Psoas muscle (tissue), 8 donors: ENCODE measurements at regions of chr6 and their contacts with region 1.

Region 1: DNA sequence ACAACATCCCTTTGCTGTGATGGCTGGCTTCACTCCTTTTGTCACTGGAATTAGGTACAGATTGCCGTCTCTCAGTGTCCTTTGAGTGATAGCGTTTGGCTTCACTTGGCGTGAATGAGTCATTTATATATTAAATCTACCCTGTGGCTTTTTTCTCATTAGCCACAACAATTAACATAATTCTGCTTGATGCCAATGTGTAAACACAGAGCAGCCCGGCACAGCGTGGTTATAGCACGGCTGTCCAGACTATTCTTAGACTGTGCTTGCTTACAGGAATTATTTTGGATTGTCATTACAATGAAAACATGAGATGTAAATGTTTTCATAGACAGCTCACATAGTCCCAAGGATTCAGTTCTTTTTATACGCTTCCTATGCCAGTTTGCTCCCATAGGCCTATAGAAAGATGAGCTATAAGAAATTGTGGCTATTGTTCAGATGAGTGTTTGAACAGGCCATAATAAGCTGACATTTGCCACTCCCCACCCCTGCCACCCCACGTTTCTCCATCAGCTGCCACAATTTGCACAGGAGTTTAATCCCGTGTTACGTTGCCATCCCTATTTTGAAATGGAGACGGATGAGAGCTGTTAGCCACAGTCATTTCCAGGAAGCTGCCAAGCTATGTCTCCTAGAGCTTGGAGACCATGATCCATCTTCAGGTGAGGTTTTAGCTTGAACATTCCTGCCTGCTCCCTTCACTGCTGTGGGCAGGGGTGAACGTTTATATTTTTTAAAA is 65.9 kb downstream of the PPP1R14C start:
- DNase-seq: no peak
- ATAC-seq: peak; percentile 63 to 77 (median 71)
- H3K4me3 ChIP-seq: no peak overlapping the region
- H3K27ac ChIP-seq: peak overlapping the region; percentile 82
- H3K4me1 ChIP-seq: peaks cover 37% of the 10 kb centered on the region
- H3K27me3 ChIP-seq: no peaks in the 10 kb centered on the region
- CTCF ChIP-seq: no peak

Region 2: GRCh38 chr6:150142670-150143515 is 65.9 kb before region 1 on chr6 and contains the start of gene PPP1R14C:
- intact Hi-C with region 1: loop called in 1 of 2 experiments (anchors 5 kb)
- DNase-seq: peak; percentile 43 to 75
- ATAC-seq: peak; percentile 79 to 84 (median 80)
- H3K4me3 ChIP-seq: peak within 1 kb of the TSS; percentile 81
- H3K27ac ChIP-seq: peak within 1 kb of the TSS; percentile 88
- H3K4me1 ChIP-seq: peaks cover 11% of the 10 kb centered on the region
- H3K27me3 ChIP-seq: peaks cover 0 to 5% (median 0%) of the 10 kb centered on the region in 3 donors
- CTCF ChIP-seq: no peak
- total RNA-seq, gene PPP1R14C: 13.3 to 62.8 (median 22.4) TPM

Region 3: GRCh38 chr6:150153542-150153876 is 55.3 kb before region 1 on chr6:
- intact Hi-C with region 1: loop called in 1 of 2 experiments (anchors 5 kb)
- DNase-seq: no peak
- ATAC-seq: no peak
- H3K4me3 ChIP-seq: no peak overlapping the region
- H3K27ac ChIP-seq: no peak overlapping the region
- H3K4me1 ChIP-seq: peaks cover 21% of the 10 kb centered on the region
- H3K27me3 ChIP-seq: peaks cover 0 to 6% (median 0%) of the 10 kb centered on the region in 3 donors
- CTCF ChIP-seq: no peak

Region 4: DNA sequence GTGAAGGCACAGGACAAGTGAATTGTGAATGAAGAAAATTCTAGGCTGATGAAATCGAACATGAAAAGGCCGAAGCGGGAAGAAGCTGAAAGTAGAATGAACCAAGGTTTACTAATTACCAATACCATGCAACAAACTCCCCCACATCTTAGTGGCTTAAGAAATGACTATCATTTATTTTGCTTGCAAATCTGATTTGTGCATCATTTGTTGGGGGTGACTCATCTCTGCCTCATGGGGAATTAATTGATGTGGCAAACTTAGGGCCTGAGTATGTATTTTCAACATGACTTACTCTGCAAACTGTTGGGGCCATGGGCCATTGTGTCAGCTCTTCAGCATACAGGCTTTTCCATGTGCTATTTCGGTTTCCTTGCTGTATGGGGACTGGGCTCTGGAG is 39.2 kb before region 1 on chr6:
- intact Hi-C with region 1: loop called in 1 of 2 experiments (anchors 5 kb)
- DNase-seq: no peak
- ATAC-seq: no peak
- H3K4me3 ChIP-seq: no peak overlapping the region
- H3K27ac ChIP-seq: peak overlapping the region; percentile 54
- H3K4me1 ChIP-seq: peaks cover 31% of the 10 kb centered on the region
- H3K27me3 ChIP-seq: no peaks in the 10 kb centered on the region
- CTCF ChIP-seq: no peak

Region 5: DNA sequence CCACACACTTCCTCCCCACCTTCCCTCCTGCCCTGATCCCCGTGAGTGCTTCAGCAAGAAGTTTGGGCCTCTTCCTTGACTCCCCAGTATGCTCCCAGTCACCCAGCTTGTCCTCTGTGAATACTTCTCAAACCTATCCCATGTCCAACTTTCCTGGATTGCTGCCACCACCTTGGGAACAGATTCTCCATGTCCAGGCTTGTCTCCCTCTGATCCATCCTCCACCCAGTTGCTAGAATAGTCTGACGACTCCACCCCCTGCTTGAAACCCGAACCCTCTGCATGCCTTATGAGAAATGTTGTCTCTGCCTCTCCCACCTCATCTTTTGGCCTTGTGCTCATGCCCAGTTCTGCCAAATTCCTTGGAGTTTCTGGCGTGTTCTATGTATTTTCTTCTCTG is 42.0 kb after region 1 on chr6:
- intact Hi-C with region 1: loop called (anchors 5 kb)
- DNase-seq: peak in 1 of 2 donors; percentile 27
- ATAC-seq: peak; percentile 48 to 79 (median 74)
- H3K4me3 ChIP-seq: no peak overlapping the region
- H3K27ac ChIP-seq: peak overlapping the region; percentile 85
- H3K4me1 ChIP-seq: peaks cover 63% of the 10 kb centered on the region
- H3K27me3 ChIP-seq: no peaks in the 10 kb centered on the region
- CTCF ChIP-seq: no peak

Region 6: DNA sequence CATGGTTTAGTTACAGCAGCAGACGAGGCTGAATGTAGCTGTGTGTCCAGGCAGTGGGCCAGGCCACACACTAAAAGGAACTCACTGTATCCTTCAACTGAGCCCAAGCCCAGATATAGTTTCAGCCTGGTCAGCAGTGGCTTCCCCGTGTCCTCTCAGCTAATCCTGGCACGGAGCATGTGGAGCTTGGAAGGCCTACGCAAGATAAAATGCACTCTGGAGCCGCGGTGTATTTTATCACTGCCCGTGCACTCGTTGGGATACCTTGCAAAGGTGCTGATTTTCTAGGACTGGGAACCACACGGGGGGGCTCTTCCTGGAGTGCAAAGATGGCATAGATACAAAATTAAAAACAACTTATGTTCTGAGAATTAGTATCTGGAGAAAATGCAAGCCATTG is 111.7 kb after region 1 on chr6:
- intact Hi-C with region 1: loop called in 1 of 2 experiments (anchors 2 kb)
- DNase-seq: peak; percentile 78 to 90
- ATAC-seq: peak; percentile 89 to 94 (median 92)
- H3K4me3 ChIP-seq: no peak overlapping the region
- H3K27ac ChIP-seq: peak overlapping the region; percentile 87
- H3K4me1 ChIP-seq: peaks cover 60% of the 10 kb centered on the region
- H3K27me3 ChIP-seq: no peaks in the 10 kb centered on the region
- CTCF ChIP-seq: no peak